ENCODE measurements at regions of chr6 and their contacts with region 1.

Region 1: DNA sequence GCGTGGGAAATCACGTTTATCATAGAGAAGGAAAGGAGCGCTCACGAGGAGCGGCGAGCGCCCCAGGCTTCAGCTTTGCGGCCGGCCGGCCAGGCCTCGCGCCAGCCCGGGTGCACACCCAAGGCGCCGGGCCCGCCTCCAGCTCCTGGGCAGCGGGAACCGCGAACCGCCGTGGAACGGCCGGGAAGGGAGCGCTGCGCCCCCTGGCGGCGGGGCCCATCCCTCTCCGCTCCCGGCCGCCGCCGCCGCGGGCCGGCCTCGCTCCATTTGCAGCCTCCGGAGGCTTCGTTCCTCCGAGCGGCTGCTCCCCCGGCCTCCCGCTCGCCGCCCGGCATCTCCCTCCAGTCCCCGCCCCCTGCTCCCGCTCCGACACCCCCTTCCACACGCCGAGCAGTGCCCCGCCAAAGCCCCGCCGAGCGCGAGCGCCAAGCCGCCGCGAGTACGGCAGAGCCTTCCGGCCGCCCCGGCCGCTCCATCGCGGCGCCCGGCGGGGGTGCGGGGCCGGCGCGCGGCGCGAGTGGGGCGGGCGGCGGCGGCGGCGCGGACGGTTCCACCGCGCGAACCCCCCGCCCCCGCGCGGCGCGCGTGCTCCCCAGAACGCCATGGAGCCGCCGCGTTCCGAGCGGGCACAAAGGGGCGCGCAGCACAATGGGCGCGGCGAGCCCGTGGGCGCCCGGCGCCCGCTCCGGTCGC is 956 bp downstream of the BEND3 start:
- DNase-seq: peak; percentile 62
- H3K4me3 Mint-ChIP-seq: peak overlapping the region; percentile 77
- H3K27ac Mint-ChIP-seq: peak overlapping the region; percentile 66
- H3K4me1 Mint-ChIP-seq: peaks cover 16% of the 10 kb centered on the region
- H3K27me3 Mint-ChIP-seq: peaks cover 9% of the 10 kb centered on the region

Region 2: DNA sequence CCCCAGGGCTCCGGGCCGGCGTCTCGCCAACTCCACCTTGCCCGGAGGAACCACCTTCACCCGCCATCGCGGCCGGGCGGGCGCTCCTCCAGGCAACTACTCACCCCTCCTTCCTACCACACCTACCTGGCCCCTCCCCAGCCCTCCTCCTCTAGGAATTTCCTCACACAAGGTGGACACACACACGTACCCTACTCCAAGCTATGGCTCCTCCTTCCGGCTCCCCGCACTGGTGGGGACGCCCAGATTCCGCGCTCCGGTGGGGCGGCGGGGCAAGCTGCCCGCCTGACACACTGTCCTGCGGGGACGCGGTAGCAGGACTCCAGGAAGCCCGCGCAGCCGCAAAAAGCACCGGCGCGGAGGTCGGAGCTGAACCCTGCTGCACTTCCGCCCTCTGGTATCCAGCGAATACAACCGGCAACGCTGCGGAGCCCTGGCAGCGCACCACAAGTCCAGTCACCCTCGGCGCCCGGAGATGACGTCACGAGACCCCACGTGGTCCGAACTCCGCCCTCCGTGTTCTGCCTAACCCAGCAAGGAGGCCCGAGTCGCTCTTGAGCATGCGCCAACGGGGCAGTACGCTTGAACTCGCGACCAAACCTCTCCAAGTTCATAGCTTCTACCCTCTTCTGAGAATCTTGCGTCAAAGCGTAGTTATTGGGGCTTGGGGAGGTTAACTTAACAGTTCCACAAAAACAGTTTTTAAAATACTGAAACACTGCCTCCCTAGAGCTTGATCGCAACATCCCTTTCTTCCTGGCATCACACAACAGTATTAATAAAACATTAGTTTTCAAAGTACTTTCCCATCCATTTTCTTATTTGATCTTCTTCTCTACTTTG is 788.8 kb before region 1 on chr6 and contains the start of gene ATG5:
- CTCF ChIA-PET with region 1: no interaction called
- intact Hi-C with region 1: loop called (anchors 10 kb)
- DNase-seq: peak; percentile 100
- H3K4me3 Mint-ChIP-seq: peak within 1 kb of the TSS; percentile 99
- H3K27ac Mint-ChIP-seq: peak within 1 kb of the TSS; percentile 89
- H3K4me1 Mint-ChIP-seq: peaks cover 39% of the 10 kb centered on the region
- H3K27me3 Mint-ChIP-seq: no peaks in the 10 kb centered on the region
- total RNA-seq, gene ATG5: 20.2 to 20.7 TPM

Region 3: DNA sequence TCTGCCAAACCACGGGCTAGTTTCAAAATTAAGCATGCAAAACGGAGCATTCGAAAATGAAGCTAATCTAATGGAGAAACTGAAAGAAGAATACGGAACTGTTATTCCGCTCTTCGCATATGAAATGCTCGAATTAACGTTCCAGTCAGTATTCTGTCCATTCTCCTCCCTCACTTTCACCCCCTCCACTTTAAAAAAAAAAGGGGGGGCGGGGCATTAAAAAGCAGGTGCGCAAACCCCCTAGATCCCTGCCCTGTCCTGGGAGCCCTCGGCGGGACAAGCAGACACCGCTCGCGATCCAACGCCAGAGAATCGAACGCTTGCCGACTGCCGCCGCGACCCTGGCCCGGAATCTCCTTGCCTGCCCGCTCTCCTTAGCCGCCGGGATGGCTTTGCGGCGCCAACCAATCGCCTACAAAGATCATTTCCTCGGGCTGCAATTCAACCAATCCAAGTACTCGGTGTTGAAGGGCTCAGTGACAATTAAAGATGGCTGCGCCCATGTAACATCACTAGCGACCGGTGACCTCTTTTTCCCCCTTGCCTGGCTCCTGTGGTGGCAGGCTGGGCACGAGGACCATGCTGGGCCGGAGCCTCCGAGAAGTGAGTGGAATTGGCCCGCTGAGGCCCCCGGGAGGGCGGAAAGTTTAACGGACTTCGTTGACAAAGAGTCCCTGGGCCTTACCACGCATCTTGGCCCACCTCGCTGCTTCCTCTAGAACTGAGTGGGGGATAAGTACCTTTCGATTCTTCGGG is 485.1 kb before region 1 on chr6 and contains the starts of genes QRSL1 and RTN4IP1:
- CTCF ChIA-PET with region 1: no interaction called
- intact Hi-C with region 1: loop called (anchors 5 kb)
- DNase-seq: peak; percentile 92
- H3K4me3 Mint-ChIP-seq: peak within 1 kb of the TSS; percentile 98
- H3K27ac Mint-ChIP-seq: peak within 1 kb of the TSS; percentile 98
- H3K4me1 Mint-ChIP-seq: peaks cover 32% of the 10 kb centered on the region
- H3K27me3 Mint-ChIP-seq: no peaks in the 10 kb centered on the region
- total RNA-seq, gene QRSL1: 19.6 to 21.6 TPM
- total RNA-seq, gene RTN4IP1: 5.5 to 6.0 TPM

Region 4: DNA sequence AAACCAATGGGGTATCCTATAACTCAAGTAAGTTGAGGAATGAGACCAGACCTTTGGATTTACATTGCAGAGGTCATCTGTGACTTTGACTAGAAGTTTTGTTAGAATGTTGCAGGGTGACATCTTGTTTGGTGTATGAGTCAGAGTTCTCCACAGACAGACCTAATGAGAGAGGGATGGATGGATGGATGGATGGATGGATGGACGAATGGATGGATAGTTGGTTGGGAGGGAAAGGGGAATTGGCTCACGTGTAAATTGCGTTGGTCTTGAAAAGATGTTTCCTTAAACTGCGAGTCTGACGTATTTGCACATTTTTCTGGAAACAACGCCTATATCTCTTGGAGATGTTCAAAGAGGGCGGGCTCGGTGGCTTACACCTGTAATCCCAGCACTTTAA is 87.4 kb before region 1 on chr6:
- CTCF ChIA-PET with region 1: interaction called, 15 read pairs
- intact Hi-C with region 1: loop called (anchors 1 kb)
- DNase-seq: no peak
- H3K4me3 Mint-ChIP-seq: peak overlapping the region; percentile 95
- H3K27ac Mint-ChIP-seq: no peak overlapping the region
- H3K4me1 Mint-ChIP-seq: peaks cover 28% of the 10 kb centered on the region
- H3K27me3 Mint-ChIP-seq: no peaks in the 10 kb centered on the region

Region 5: DNA sequence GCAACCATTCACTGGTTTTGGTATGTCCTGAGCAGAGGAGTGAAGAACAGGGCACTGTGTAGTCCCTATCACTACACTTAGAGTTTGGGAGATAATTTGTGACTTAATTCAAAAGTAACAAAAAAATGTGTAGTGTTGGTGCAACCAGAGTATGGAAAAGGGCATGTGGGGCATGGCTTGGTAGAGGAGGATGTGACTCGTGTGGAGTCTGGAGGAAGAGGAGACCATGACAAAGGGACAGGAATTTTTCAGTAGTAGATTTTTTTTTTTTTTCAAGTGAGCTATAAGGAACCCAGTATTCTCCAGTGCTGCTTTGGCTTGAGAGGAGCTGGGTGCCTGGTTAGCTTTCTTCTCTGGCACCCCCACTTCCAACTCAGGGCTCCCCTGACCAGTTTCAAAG is 81.2 kb before region 1 on chr6:
- CTCF ChIA-PET with region 1: interaction called, 15 read pairs
- intact Hi-C with region 1: loop called (anchors 1 kb)
- DNase-seq: no peak
- H3K4me3 Mint-ChIP-seq: no peak overlapping the region
- H3K27ac Mint-ChIP-seq: no peak overlapping the region
- H3K4me1 Mint-ChIP-seq: peaks cover 42% of the 10 kb centered on the region
- H3K27me3 Mint-ChIP-seq: no peaks in the 10 kb centered on the region

Region 6: GRCh38 chr6:107064579-107065065 is 49.7 kb before region 1 on chr6:
- CTCF ChIA-PET with region 1: interaction called, 9 read pairs
- intact Hi-C with region 1: loop called (anchors 5 kb)
- DNase-seq: peak; percentile 29
- H3K4me3 Mint-ChIP-seq: no peak overlapping the region
- H3K27ac Mint-ChIP-seq: no peak overlapping the region
- H3K4me1 Mint-ChIP-seq: peaks cover 35% of the 10 kb centered on the region
- H3K27me3 Mint-ChIP-seq: no peaks in the 10 kb centered on the region

Region 7: GRCh38 chr6:107218142-107218541 is 103.8 kb after region 1 on chr6:
- CTCF ChIA-PET with region 1: no interaction called
- intact Hi-C with region 1: no loop called
- DNase-seq: no peak
- H3K4me3 Mint-ChIP-seq: no peak overlapping the region
- H3K27ac Mint-ChIP-seq: no peak overlapping the region
- H3K4me1 Mint-ChIP-seq: no peaks in the 10 kb centered on the region
- H3K27me3 Mint-ChIP-seq: no peaks in the 10 kb centered on the region

Region 8: GRCh38 chr6:108294727-108295625 is 1180.6 kb after region 1 on chr6 and contains the start of gene AFG1L:
- CTCF ChIA-PET with region 1: no interaction called
- intact Hi-C with region 1: loop called (anchors 10 kb)
- DNase-seq: peak; percentile 91
- H3K4me3 Mint-ChIP-seq: peak within 1 kb of the TSS; percentile 99
- H3K27ac Mint-ChIP-seq: peak within 1 kb of the TSS; percentile 100
- H3K4me1 Mint-ChIP-seq: peaks cover 19% of the 10 kb centered on the region
- H3K27me3 Mint-ChIP-seq: no peaks in the 10 kb centered on the region
- total RNA-seq, gene AFG1L: 5.4 to 5.9 TPM